Sigmoid colon (tissue), 7 donors: ENCODE measurements at regions of chr17 and their contacts with region 1.

Region 1: DNA sequence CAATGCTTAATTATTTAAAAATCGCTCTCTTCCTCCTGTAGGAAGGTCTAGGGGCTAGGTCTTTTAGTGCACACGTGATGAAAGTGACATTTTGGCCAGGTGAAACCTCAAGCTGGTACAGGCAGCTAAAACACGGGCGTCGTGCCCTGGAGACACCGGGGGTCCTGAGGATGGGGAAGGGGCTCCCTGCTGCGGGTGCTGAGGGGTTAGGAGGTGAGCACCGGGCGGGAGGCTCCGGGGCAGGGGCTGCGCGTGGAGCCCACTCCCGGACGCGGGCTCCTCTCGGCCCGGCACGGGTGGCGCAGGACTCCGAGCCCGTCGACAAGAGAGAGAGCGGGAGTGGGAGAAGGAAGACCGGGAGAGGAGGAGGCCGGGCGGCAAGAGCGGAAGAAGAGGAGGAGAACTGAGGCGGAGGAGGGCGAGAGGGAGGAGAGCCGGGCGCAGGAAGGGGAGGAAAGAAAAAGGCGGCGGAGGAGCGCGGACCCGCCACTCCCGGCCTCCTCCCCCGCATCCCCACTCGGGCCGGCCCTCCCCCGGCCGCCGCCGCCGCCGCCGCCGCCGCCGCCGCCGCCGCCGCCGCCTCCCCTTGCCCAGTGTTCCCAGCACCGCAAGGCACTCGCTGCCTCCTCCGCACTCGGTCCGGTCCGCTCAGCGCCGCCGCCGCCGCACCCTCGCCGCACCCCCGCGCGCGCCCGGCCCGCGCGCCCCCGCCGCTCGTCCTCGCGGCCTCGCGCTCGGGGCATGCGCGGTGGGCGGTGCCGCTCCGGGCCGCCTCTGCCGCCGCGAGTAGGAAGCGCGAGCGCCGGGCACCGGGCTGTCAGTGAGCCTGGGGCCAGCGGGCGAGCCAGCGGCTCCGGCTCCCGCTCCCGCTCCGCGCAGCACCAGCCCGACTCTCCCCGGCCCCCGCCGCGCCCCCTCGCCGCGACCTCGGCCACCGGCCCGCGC is at the start of gene PRKCA:
- DNase-seq: peak; percentile 86
- H3K4me3 ChIP-seq: peak within 1 kb of the TSS; percentile 84 to 98 (median 94)
- H3K27ac ChIP-seq: peak within 1 kb of the TSS; percentile 85 to 95 (median 91)
- H3K4me1 ChIP-seq: peaks cover 0 to 33% (median 21%) of the 10 kb centered on the region in 4 donors
- H3K27me3 ChIP-seq: no peaks in the 10 kb centered on the region
- CTCF ChIP-seq: peak in 1 of 4 experiments; percentile 6
- EP300 ChIP-seq: no peak
- POLR2A ChIP-seq: no peak
- total RNA-seq, gene PRKCA: 42.6 to 58.4 (median 52.0) TPM

Region 2: GRCh38 chr17:66348584-66349165 is 46.6 kb after region 1 on chr17:
- intact Hi-C with region 1: loop called (anchors 5 kb)
- DNase-seq: peak; percentile 75
- H3K4me3 ChIP-seq: no peak overlapping the region
- H3K27ac ChIP-seq: peak overlapping the region in 3 of 4 donors; percentile 62 to 79 (median 73)
- H3K4me1 ChIP-seq: peaks cover 0 to 67% (median 49%) of the 10 kb centered on the region in 4 donors
- H3K27me3 ChIP-seq: no peaks in the 10 kb centered on the region
- CTCF ChIP-seq: no peak
- EP300 ChIP-seq: peak in 1 of 4 donors; percentile 32
- POLR2A ChIP-seq: no peak

Region 3: DNA sequence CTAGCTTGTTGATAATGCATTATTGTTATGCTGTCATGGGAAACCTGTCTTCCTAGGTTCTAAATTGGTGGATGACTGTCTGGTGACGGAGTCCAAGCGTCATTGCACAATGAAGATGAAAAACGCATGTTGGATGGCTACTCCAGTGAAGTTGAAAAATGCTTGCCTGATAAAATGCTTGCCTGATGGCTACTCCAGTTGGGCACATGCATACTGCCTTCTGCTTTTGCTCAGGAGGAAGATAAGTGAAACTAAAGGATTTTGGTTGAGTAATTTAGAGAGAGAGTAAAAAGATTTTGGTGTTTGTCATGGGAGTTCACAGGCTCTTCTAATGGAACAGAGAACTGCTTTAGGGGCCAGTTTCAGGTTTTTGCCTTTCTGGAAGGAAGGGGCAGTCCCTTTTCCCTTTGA is 118.9 kb after region 1 on chr17:
- intact Hi-C with region 1: no loop called
- DNase-seq: no peak
- H3K4me3 ChIP-seq: no peak overlapping the region
- H3K27ac ChIP-seq: peak overlapping the region; percentile 5 to 67 (median 42)
- H3K4me1 ChIP-seq: peaks cover 0 to 45% (median 39%) of the 10 kb centered on the region in 4 donors
- H3K27me3 ChIP-seq: no peaks in the 10 kb centered on the region
- CTCF ChIP-seq: no peak
- EP300 ChIP-seq: no peak
- POLR2A ChIP-seq: no peak

Region 4: DNA sequence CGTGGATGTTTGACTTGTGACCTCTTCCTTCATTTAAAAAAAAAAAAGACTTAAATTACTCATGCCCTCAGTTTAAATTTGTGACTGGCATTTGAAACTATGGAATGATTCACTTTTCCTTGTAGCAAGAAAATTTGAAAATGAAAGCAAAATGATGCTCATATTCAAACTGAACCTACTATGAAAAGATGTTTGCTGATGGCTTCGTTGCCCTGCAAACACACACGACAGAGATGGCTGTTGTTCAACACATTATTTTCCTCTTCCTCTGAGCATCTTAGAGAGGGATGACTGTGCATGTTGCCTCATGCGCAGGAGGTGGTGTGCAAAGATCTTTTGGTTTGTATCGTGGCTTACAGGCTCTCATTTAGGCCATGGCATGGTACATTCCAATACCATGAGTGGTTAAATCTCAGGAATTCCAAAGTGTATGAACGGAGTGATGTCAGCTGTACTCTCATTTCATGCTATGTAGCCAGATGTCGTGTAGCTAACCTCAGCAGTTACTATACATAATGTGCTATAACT is 164.8 kb after region 1 on chr17:
- intact Hi-C with region 1: loop called (anchors 10 kb)
- DNase-seq: peak; percentile 74
- H3K4me3 ChIP-seq: peak overlapping the region in 1 of 4 donors; percentile 9
- H3K27ac ChIP-seq: peak overlapping the region; percentile 51 to 75 (median 73)
- H3K4me1 ChIP-seq: peaks cover 0 to 78% (median 71%) of the 10 kb centered on the region in 4 donors
- H3K27me3 ChIP-seq: no peaks in the 10 kb centered on the region
- CTCF ChIP-seq: no peak
- EP300 ChIP-seq: no peak
- POLR2A ChIP-seq: no peak

Region 5: DNA sequence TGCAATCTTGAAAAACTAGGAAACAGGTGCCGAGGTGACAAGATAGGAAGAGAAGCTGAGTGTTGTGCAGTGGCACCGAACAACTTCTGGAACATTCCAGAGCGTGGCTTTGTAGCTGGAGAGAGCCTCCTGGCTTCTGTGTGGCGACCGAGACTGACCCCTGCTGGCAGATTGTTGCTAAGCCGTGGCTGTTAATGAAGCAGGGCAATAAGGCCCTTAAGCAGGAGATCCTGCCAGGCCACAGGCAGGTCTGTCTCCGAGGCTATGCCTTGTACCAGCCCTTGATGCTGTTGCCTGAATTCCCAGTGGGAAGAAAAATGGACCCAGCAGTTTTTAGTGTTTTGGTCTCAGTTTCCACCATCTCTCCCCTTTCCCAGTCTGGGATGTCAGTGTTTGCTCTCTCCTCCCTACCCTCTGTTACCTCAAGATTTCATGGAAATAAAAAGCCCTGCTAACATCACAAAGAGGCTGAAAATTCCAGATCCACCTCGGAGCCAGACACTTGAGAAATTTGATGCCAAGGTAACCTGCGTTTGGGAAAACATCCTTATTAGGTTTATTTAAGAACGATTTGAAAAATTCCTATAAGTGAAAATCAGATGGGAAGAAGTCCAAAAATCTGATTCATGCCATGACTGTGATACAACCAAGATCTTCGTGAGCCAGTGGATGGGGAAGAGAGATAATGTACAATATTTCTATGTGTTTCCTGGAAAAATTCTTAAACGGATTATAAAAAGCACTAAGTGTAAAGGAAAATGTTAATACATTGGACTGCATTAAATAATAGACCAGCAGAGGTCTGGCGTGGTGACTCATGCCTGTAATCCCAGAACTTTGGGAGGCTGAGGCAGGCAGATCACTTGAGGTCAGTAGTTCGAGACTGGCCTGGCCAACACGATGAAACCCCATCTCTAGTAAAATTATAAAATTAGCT is 265.4 kb after region 1 on chr17:
- intact Hi-C with region 1: loop called (anchors 5 kb)
- DNase-seq: peak; percentile 87
- H3K4me3 ChIP-seq: no peak overlapping the region
- H3K27ac ChIP-seq: peak overlapping the region in 2 of 4 donors; percentile 1 to 30
- H3K4me1 ChIP-seq: peaks cover 0 to 33% (median 20%) of the 10 kb centered on the region in 4 donors
- H3K27me3 ChIP-seq: no peaks in the 10 kb centered on the region
- CTCF ChIP-seq: peak; percentile 70 to 83 (median 73)
- EP300 ChIP-seq: no peak
- POLR2A ChIP-seq: no peak

Region 6: DNA sequence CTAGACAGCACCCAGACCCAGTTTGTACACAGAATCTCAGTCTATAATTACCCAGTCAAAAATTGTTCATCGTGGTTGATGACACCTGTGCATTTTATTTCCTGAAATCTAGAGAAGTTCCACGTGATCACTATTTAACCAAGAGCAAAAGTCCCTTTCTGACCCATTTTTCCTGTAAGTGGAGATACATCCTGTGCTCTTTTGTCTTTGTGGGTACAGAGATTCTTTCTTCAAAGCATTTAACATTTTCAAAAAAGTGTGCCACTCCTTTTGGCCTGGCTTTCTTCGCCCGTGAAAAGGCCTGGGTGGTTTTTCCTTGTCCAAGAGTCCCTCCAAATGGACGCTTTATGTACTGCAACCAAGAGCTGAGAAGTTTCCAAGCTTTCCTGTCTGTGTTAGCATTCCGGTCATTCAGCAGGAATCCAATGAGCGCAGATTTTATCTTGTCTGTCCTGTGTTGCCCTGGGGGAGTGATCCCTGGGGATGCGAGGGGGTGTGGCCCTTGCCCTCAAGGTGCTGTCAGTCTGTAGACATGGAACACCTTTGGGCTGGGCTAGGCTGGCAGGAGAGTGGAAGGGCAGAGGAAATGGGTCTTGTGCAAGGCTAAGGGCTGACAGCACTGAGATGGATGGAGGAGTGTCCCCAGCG is 371.7 kb after region 1 on chr17:
- intact Hi-C with region 1: loop called (anchors 5 kb)
- DNase-seq: peak; percentile 66
- H3K4me3 ChIP-seq: no peak overlapping the region
- H3K27ac ChIP-seq: peak overlapping the region; percentile 10 to 66 (median 55)
- H3K4me1 ChIP-seq: peaks cover 0 to 33% (median 31%) of the 10 kb centered on the region in 4 donors
- H3K27me3 ChIP-seq: no peaks in the 10 kb centered on the region
- CTCF ChIP-seq: peak; percentile 62 to 84 (median 74)
- EP300 ChIP-seq: no peak
- POLR2A ChIP-seq: no peak